ENCODE measurements at regions of chr14 and their contacts with region 1.

Region 1: DNA sequence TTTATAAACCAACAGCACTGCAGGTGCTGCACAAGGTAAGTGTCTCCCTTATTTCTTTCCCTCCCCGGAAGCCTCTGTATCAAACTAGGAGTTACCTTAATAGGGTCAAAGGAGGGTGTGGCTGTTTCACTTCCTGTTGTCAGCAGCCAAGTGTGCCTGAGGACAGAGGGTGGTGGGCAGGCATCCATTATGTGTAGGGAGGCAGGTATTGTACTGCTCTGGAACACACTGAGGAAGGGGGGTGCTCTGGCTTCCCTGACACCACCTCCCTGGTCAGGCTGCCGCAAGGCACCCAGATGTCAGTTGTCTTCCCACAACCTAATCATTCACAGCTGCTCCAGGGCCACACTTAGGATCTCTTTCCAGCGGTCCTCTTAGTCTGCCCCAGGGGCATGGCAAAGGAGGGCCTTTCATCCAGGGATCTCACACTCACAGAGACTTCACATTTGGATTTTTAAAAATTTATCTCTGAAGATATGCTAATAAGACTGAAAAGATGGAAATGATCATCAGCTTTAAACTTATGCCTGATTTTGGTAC is 132.0 kb upstream of the ARHGAP5 start:
- DNase-seq: peak; percentile 65 to 73 (median 69)
- ATAC-seq: peak; percentile 81
- H3K4me3 ChIP-seq: no peak overlapping the region
- H3K4me1 ChIP-seq: peaks cover 18% of the 10 kb centered on the region
- CTCF ChIP-seq: no peak

Region 2: DNA sequence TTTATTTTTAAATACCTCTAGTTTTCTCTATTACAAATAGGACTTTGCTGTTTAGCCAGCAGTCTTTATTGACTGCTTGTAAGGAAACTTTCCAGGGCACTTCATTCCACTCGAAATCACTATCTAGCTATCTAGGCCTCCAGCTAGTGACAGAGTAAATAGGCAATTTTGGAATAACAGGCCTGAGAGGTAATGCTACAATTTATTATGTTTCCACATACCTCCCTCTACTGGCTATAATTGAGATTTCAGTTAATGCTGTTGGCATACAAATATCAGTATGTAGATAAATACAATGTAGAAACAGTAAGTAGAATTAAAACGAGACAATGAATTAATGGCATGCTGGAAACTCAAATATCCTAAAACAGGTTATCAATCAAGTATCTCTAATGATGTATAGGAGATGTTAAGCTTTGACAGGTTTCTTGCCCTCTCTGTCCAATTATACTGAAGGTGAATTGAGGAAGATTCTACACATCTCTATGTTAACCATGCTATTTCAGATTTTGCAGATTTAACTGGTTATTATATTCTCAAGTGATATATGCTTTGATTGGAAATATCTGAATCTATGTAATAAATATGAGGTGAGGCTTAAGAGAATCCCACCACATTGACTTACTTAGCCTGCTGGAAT is 495.1 kb before region 1 on chr14:
- intact Hi-C with region 1: no loop called
- DNase-seq: no peak
- ATAC-seq: peak; percentile 46
- H3K4me3 ChIP-seq: no peak overlapping the region
- H3K4me1 ChIP-seq: no peaks in the 10 kb centered on the region
- CTCF ChIP-seq: no peak

Region 3: GRCh38 chr14:31864937-31865855 is 79.9 kb before region 1 on chr14:
- intact Hi-C with region 1: no loop called
- DNase-seq: no peak
- ATAC-seq: no peak
- H3K4me3 ChIP-seq: no peak overlapping the region
- H3K4me1 ChIP-seq: no peaks in the 10 kb centered on the region
- CTCF ChIP-seq: no peak

Region 4: GRCh38 chr14:32076278-32077080 is 131.3 kb after region 1 on chr14:
- intact Hi-C with region 1: loop called in 1 of 2 experiments (anchors 10 kb)
- DNase-seq: peak; percentile 95 to 98 (median 96)
- ATAC-seq: peak; percentile 89
- H3K4me3 ChIP-seq: peak overlapping the region; percentile 99
- H3K4me1 ChIP-seq: peaks cover 28% of the 10 kb centered on the region
- CTCF ChIP-seq: no peak

Region 5: DNA sequence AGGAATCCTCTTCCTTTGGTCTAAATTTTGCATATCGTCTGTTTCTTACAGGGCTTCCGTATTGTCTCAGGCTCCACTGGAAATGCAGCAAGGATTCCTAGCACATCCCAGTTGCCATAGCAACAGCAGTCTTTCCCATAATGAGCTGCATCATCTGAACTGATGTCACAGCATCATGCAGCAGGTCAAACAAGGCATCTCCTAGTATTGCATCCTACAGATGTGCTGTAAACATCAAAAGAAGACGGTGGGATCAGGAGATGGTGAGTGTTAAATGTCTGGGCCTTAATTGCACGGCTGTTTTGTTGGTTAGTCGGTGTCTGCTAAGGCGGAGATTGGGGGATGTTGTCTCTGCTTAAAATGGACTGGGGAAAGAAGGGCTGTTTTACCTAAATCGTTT is 384.0 kb after region 1 on chr14 and contains the start of gene AKAP6:
- intact Hi-C with region 1: no loop called
- DNase-seq: no peak
- ATAC-seq: no peak
- H3K4me3 ChIP-seq: no peak within 1 kb of the TSS
- H3K4me1 ChIP-seq: peaks cover 6% of the 10 kb centered on the region
- CTCF ChIP-seq: no peak
- total RNA-seq, gene AKAP6: 4.2 to 30.8 (median 5.4) TPM